Activated CD4-positive, alpha-beta T cell treated with anti-CD3 and anti-CD28 coated beads for 36 hours (primary cell): ENCODE measurements at regions of chr1 and their contacts with region 1.

Region 1: GRCh38 chr1:23634842-23635651 is 56.6 kb upstream of the RPL11 start:
- DNase-seq: peak; percentile 69
- ATAC-seq: peak; percentile 87
- H3K4me3 Mint-ChIP-seq: peak overlapping the region; percentile 40
- H3K27ac Mint-ChIP-seq: peak overlapping the region; percentile 79
- H3K4me1 Mint-ChIP-seq: peaks cover 30% of the 10 kb centered on the region
- H3K27me3 Mint-ChIP-seq: no peaks in the 10 kb centered on the region

Region 2: GRCh38 chr1:23019094-23019862 is 615.8 kb before region 1 on chr1 and contains the start of gene KDM1A:
- CTCF ChIA-PET with region 1: no interaction called
- POLR2A ChIA-PET with region 1: interaction called, 10 read pairs
- intact Hi-C with region 1: no loop called
- DNase-seq: peak; percentile 96
- ATAC-seq: peak; percentile 97
- H3K4me3 Mint-ChIP-seq: peak within 1 kb of the TSS; percentile 98
- H3K27ac Mint-ChIP-seq: peak within 1 kb of the TSS; percentile 90
- H3K4me1 Mint-ChIP-seq: peaks cover 43% of the 10 kb centered on the region
- H3K27me3 Mint-ChIP-seq: no peaks in the 10 kb centered on the region
- total RNA-seq, gene KDM1A: 66.5 to 73.2 TPM

Region 3: GRCh38 chr1:23524716-23525401 is 110.2 kb before region 1 on chr1:
- CTCF ChIA-PET with region 1: interaction called, 82 read pairs
- POLR2A ChIA-PET with region 1: interaction called, 6 read pairs
- intact Hi-C with region 1: no loop called
- DNase-seq: peak; percentile 39
- ATAC-seq: no peak
- H3K4me3 Mint-ChIP-seq: peak overlapping the region; percentile 28
- H3K27ac Mint-ChIP-seq: peak overlapping the region; percentile 25
- H3K4me1 Mint-ChIP-seq: peaks cover 63% of the 10 kb centered on the region
- H3K27me3 Mint-ChIP-seq: no peaks in the 10 kb centered on the region

Region 4: DNA sequence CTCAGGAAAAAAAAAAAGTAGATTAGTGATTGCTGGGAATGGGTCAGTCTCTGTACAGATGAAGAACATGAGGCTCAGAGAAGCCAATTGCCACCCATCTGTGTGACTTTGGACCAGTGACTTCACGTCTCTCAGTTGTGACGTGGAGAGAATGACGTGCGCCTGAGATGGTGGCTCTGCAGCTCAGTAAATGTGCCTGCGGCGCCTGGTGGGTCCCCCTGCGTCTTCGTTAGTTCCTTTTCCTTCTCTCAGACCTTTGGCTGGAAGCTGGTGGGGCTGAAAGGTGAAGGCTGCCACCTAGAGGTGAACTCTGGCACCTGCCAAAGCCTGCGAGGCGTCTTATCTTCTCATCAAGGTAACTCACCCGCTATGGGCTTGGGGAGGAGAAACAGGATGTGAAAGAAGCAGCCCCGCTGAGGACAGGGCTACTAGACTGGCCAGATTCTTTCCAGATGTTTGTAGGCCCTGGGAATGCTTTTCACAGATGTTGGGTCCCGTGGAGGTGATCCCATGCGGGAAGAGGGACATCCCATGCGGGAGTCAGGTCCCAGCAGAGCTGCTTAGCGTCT is 95.3 kb before region 1 on chr1:
- CTCF ChIA-PET with region 1: interaction called, 678 read pairs
- POLR2A ChIA-PET with region 1: interaction called, 3 read pairs
- intact Hi-C with region 1: loop called (anchors 1 kb)
- DNase-seq: peak; percentile 95
- ATAC-seq: peak; percentile 95
- H3K4me3 Mint-ChIP-seq: peak overlapping the region; percentile 18
- H3K27ac Mint-ChIP-seq: peak overlapping the region; percentile 61
- H3K4me1 Mint-ChIP-seq: peaks cover 13% of the 10 kb centered on the region
- H3K27me3 Mint-ChIP-seq: no peaks in the 10 kb centered on the region

Region 5: DNA sequence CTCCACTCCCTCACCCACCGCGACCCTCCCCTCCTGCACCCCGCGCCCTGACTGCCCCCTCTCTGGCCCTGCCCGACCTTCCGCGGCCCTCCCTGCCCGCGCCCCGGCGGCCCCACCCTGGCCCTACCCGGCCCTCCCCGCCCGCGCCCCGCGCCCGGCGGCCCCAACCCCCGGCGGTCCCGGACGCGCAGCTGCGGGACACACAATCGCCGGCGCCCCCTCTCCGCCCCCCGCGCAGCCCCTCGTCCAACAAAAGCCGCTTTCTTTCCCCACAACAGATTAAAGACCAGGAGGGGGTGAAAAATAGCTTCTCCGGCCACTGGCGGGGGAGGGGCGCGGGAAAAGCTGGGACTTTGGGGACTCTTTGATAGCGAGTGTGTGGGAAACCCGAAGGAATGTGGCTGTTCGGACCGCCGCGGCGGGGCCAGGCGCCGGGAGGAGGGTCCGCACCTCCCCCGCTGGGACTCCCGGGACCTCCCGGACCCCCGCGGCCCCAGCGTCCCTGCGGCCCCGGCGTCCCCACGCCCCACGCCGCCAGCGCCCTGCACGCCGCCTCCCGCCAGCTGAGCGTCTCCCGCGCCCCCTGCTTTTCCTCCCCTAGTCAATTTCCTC is 66.9 kb before region 1 on chr1:
- CTCF ChIA-PET with region 1: interaction called, 14 read pairs
- POLR2A ChIA-PET with region 1: no interaction called
- intact Hi-C with region 1: no loop called
- DNase-seq: no peak
- ATAC-seq: no peak
- H3K4me3 Mint-ChIP-seq: peak overlapping the region; percentile 70
- H3K27ac Mint-ChIP-seq: peak overlapping the region; percentile 79
- H3K4me1 Mint-ChIP-seq: peaks cover 14% of the 10 kb centered on the region
- H3K27me3 Mint-ChIP-seq: peaks cover 11% of the 10 kb centered on the region

Region 6: GRCh38 chr1:23591460-23592208 is 43.4 kb before region 1 on chr1:
- CTCF ChIA-PET with region 1: interaction called, 13 read pairs
- POLR2A ChIA-PET with region 1: interaction called, 5 read pairs
- intact Hi-C with region 1: no loop called
- DNase-seq: peak; percentile 84
- ATAC-seq: peak; percentile 85
- H3K4me3 Mint-ChIP-seq: peak overlapping the region; percentile 32
- H3K27ac Mint-ChIP-seq: peak overlapping the region; percentile 96
- H3K4me1 Mint-ChIP-seq: peaks cover 65% of the 10 kb centered on the region
- H3K27me3 Mint-ChIP-seq: no peaks in the 10 kb centered on the region

Region 7: DNA sequence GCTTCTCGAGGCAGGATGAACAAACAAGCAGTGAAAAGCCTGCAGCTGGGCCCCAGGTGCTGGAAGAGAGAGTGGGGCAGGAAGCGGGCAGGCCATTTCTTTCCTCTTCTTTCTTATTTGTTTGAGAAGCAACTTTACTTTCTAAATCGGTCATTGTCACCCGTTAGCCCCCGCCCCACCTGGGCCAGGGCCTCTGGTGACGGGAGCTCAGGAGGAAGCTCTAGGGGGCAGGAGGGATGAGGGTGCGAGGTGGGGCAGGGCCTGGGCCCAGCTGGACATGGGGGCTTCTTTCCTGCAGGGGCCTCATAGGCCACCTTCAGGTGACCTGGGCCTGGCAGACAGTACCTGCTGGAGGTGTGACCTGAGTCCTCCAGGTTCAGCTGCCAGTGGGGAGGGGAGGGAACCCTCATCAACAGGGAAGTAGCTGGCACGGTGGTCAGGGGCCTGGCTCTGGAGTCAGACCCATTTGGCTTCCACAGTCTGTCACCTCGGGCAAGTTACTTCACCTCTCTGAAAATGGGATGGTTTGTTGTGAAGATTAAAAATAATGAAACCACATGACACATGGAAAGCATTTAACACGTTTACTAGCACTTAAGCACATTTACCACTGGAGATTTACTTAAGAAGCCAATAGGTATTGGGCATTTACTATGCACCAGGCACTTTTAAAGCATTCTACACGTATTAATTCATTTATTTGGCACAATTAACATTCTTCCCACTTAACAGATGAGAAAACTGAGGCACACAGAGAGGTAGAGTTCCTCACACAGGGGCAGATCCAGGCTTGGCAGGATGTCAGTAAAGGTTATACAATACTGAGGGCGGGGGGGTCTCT is 21.6 kb before region 1 on chr1:
- CTCF ChIA-PET with region 1: interaction called, 12 read pairs
- POLR2A ChIA-PET with region 1: no interaction called
- intact Hi-C with region 1: loop called in 1 of 2 experiments (anchors 1 kb)
- DNase-seq: peak; percentile 80
- ATAC-seq: peak; percentile 66
- H3K4me3 Mint-ChIP-seq: peak overlapping the region; percentile 10
- H3K27ac Mint-ChIP-seq: peak overlapping the region; percentile 77
- H3K4me1 Mint-ChIP-seq: peaks cover 78% of the 10 kb centered on the region
- H3K27me3 Mint-ChIP-seq: no peaks in the 10 kb centered on the region